HepG2 (cell line): ENCODE measurements at regions of chr4 and their contacts with region 1.

Region 1: DNA sequence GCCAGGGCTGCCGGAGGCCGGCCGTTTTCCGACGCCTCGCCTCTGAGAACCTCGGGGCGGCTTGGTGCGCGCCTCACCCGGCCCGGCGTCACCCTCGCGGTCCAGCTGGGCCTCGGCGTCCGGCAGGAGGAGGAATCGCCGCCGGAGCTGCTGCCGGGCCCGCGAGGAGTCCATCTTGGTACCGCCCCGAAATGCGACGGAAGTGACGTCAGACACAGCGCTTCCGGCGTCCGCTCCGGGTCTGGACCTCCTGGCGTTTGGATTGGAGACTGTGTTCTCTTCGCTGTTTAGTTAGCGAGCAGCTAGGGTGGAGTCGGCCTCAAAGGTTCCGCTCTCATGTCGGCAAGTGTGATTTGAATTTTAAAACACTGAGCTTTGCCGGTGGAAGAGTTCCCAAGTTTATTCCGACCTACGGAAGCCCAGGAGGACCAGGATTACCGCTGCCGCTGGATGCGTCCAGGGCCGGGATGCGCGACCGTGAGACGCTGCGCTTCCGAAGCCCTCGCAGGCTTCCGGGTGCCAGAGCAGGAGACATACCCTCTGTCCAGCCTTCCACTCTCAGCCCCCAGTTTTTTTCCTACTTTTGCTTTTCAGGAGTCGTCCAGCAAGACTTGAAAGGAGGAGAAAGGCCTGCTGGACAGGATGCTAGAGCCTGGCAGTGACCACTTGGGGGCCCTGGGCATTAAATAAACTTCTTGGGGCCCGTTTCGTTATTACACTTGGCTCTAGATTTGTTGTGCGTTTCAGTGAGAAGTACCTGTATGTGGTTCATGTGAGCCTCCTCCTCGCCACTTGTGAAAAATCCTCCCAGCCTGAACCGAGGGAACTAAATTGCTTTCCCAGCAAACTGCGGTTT is at the start of gene TMEM128:
- DNase-seq: peak; percentile 90
- ATAC-seq: peak; percentile 96
- H3K4me3 ChIP-seq: peak within 1 kb of the TSS; percentile 78 to 93 (median 86)
- H3K27ac ChIP-seq: peak within 1 kb of the TSS; percentile 92
- H3K4me1 ChIP-seq: peaks cover 33% of the 10 kb centered on the region
- H3K27me3 ChIP-seq: no peaks in the 10 kb centered on the region; a peak in 1 of 5 replicates
- CTCF ChIP-seq: peak; percentile 36
- EP300 ChIP-seq: no peak
- POLR2A ChIP-seq: peak; percentile 89 to 92
- RAD21 ChIP-seq: no peak
- total RNA-seq, gene TMEM128: 17.2 and 19.4 TPM in 2 replicates

Region 2: GRCh38 chr4:4289941-4290850 is 41.9 kb after region 1 on chr4 and contains the starts of genes LYAR and ZBTB49:
- CTCF ChIA-PET with region 1: no interaction called
- POLR2A ChIA-PET with region 1: interaction called, 3 read pairs
- in situ Hi-C with region 1: no loop called
- intact Hi-C with region 1: loop called (anchors 2 kb)
- DNase-seq: peak; percentile 86
- ATAC-seq: peak; percentile 89
- H3K4me3 ChIP-seq: peak within 1 kb of the TSS; percentile 82 to 97 (median 88)
- H3K27ac ChIP-seq: peak within 1 kb of the TSS; percentile 72
- H3K4me1 ChIP-seq: peaks cover 51% of the 10 kb centered on the region
- H3K27me3 ChIP-seq: no peaks in the 10 kb centered on the region; a peak in 1 of 5 replicates
- CTCF ChIP-seq: peak; percentile 48
- EP300 ChIP-seq: no peak
- POLR2A ChIP-seq: peak; percentile 74 to 94; a peak in 3 of 4 replicates
- RAD21 ChIP-seq: 0 out of 2 replicates have a peak, but pooled peaks have one; percentile 44
- total RNA-seq, gene LYAR: 94.2 and 132 TPM in 2 replicates
- total RNA-seq, gene ZBTB49: 3.3 and 4.6 TPM in 2 replicates

Region 3: GRCh38 chr4:4334798-4335520 is 86.7 kb after region 1 on chr4:
- CTCF ChIA-PET with region 1: interaction called, 8 read pairs
- POLR2A ChIA-PET with region 1: interaction called, 5 read pairs
- in situ Hi-C with region 1: no loop called
- intact Hi-C with region 1: loop called (anchors 1 kb)
- DNase-seq: peak; percentile 60
- ATAC-seq: peak; percentile 89
- H3K4me3 ChIP-seq: peak overlapping the region; percentile 55 to 67 (median 56)
- H3K27ac ChIP-seq: no peak overlapping the region
- H3K4me1 ChIP-seq: peaks cover 45% of the 10 kb centered on the region
- H3K27me3 ChIP-seq: no peaks in the 10 kb centered on the region; a peak in 1 of 5 replicates
- CTCF ChIP-seq: peak; percentile 96
- EP300 ChIP-seq: no peak
- POLR2A ChIP-seq: no peak
- RAD21 ChIP-seq: peak; percentile 91

Region 4: GRCh38 chr4:4443821-4444220 is 195.6 kb after region 1 on chr4:
- CTCF ChIA-PET with region 1: no interaction called
- POLR2A ChIA-PET with region 1: no interaction called
- in situ Hi-C with region 1: no loop called
- intact Hi-C with region 1: no loop called
- DNase-seq: no peak
- ATAC-seq: no peak
- H3K4me3 ChIP-seq: no peak overlapping the region
- H3K27ac ChIP-seq: no peak overlapping the region
- H3K4me1 ChIP-seq: no peaks in the 10 kb centered on the region
- H3K27me3 ChIP-seq: no peaks in the 10 kb centered on the region
- CTCF ChIP-seq: no peak
- EP300 ChIP-seq: no peak
- POLR2A ChIP-seq: no peak
- RAD21 ChIP-seq: no peak

Region 5: DNA sequence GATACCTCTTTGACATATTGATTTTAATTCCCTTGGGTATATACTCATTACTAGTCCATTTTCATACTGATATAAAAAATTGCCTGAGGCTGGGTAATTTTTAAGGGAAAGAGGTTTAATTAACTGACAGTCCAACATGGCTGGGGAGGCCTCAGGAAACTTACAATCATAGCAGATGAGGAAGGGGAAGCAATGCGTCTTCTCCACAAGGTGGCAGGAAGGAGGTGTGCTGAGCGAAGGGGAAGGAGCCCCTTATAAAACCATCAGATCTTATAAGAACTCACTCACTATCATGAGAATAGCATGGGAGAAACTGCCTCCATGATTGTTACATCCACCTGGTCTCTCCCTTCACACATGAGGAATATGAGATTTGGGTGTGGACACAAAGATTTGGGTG is 653.6 kb after region 1 on chr4:
- CTCF ChIA-PET with region 1: no interaction called
- POLR2A ChIA-PET with region 1: no interaction called
- in situ Hi-C with region 1: no loop called
- intact Hi-C with region 1: no loop called
- DNase-seq: no peak
- ATAC-seq: no peak
- H3K4me3 ChIP-seq: no peak overlapping the region
- H3K27ac ChIP-seq: no peak overlapping the region
- H3K4me1 ChIP-seq: no peaks in the 10 kb centered on the region
- H3K27me3 ChIP-seq: peaks cover 4 to 7% of the 10 kb centered on the region in 2 experiments; a peak in 2 of 5 replicates
- CTCF ChIP-seq: no peak
- EP300 ChIP-seq: no peak
- POLR2A ChIP-seq: no peak
- RAD21 ChIP-seq: no peak